ENCODE measurements at regions of chr1 and their contacts with region 1.

Region 1: GRCh38 chr1:115456441-115456961 is 118.5 kb upstream of the NGF start:
- DNase-seq: no peak
- H3K4me3 ChIP-seq: no peak overlapping the region
- H3K27ac ChIP-seq: no peak overlapping the region
- H3K27me3 ChIP-seq: no peaks in the 10 kb centered on the region
- CTCF ChIP-seq: no peak

Region 2: DNA sequence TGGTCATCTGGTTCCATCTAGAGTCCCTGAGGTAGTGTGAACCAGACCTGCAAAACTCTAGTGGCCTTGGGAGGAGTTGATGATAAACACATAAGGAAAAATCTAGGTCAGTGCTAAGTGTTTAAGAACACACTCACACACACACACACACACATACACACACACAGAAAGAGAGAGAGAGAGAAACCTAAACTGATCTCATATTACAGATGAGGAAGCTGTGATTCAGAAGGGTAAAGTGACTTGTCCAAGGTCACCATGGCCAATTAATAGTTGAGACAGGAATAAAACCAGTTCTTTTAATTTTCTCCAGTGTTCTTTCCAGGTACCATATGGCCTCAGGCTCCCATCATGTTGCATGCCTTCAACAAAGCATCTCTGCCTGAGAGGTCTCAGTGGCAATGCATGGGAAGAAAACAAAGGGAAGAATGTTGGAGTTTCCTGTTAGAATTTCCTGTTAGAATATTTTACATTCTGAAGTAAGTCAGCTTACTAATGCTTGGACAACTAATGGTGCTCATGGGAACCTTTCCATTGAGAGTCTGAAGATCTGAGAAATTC is 289.9 kb before region 1 on chr1:
- CTCF ChIA-PET with region 1: no interaction called
- POLR2A ChIA-PET with region 1: interaction called, 11 read pairs
- DNase-seq: no peak
- H3K4me3 ChIP-seq: no peak overlapping the region
- H3K27ac ChIP-seq: no peak overlapping the region
- H3K27me3 ChIP-seq: no peaks in the 10 kb centered on the region
- CTCF ChIP-seq: no peak

Region 3: DNA sequence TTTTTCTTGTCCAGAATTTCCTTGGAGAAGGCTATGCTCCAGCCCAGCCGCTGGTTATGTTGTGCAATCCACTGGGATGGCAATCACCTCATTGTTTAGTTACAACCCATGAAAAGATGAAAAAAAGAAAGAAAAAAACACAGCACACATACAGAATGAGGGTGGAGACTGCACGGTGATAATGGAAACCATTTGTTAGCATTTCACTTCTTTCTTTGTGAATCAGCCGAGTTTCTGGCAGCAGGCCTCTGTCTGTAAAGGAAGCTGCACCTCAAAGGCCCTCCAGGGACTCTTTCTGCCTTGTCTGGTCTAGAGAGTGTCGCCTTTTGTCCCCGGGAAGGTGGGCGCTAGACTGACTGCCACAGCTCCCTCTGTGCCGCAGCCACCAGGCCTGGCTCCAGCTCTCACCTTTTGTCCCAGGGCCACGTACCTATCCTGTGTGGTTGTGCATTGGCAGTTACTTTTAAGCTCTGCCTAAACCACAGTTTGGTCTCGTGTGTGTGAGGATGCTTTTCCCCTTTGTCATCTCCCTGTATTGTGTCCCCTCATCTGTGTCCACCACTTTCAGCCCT is 154.0 kb before region 1 on chr1:
- CTCF ChIA-PET with region 1: no interaction called
- POLR2A ChIA-PET with region 1: interaction called, 14 read pairs
- DNase-seq: peak; percentile 75
- H3K4me3 ChIP-seq: no peak overlapping the region
- H3K27ac ChIP-seq: peak overlapping the region; percentile 89
- H3K27me3 ChIP-seq: no peaks in the 10 kb centered on the region
- CTCF ChIP-seq: 0 out of 2 replicates have a peak, but pooled peaks have one; percentile 3

Region 4: GRCh38 chr1:115469703-115470476 is 13.4 kb after region 1 on chr1:
- CTCF ChIA-PET with region 1: interaction called, 10 read pairs
- POLR2A ChIA-PET with region 1: interaction called, 5 read pairs
- DNase-seq: no peak
- H3K4me3 ChIP-seq: no peak overlapping the region
- H3K27ac ChIP-seq: no peak overlapping the region
- H3K27me3 ChIP-seq: no peaks in the 10 kb centered on the region
- CTCF ChIP-seq: peak; percentile 98